H1 (cell line): ENCODE measurements at regions of chr1 and their contacts with region 1.

Region 1: DNA sequence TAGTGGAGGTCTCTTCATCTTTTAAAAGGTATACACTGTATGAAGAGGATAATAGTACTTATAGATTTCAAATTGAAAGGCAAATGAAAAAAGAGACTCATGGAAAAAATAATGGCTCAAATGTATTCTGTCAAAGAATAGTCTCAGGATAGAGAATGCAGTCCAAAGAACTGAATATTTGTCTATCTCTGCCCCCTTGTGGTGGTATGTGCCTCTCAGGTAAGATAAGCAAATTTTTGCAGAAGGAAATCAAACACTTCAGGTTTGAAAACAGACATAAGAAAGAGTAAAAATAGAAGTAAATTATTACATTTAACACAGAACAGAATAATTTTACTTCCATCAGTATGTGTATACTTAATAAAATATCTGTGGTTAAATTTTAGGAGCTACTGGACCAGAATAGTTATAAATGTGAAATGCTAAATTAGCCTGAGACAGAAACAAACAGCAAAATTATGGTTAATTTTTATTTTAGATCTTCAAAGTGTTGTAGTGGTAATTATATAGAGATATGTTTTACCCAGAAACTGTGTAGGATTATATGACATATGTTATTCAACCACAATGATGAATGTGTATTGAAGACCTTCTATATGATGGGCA is 164.4 kb upstream of the PALMD start:
- DNase-seq: no peak
- H3K4me3 ChIP-seq: no peak overlapping the region
- H3K27ac ChIP-seq: no peak overlapping the region
- H3K4me1 ChIP-seq: no peaks in the 10 kb centered on the region
- H3K27me3 ChIP-seq: no peaks in the 10 kb centered on the region
- CTCF ChIP-seq: peak in 2 of 3 experiments; percentile 58 to 69; a peak in 2 of 4 replicates
- EP300 ChIP-seq: no peak
- POLR2A ChIP-seq: no peak
- RAD21 ChIP-seq: peak; percentile 83 to 86

Region 2: DNA sequence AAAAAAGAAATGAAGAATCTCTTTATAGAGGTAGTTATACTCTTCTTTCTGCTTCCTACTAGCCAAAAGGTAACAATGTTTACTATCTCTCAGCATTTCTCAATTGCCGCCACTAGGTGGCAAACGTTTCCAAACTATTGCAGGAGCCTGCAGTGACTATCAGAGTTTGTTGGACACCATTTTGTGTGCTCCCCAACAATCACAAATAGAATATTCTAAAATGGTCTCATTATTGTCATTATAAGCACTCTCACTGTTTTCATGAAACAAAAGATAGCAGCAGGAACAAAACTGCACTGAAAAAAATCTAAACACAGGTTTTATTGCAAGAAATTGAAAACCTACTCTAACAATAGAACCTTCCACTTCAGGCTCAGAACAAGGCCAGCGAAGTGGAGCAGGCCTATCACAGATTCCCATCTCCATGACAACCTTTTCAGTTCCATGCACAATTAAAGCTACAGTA is 301.1 kb before region 1 on chr1:
- CTCF ChIA-PET with region 1: interaction called, 29 read pairs
- POLR2A ChIA-PET with region 1: no interaction called
- DNase-seq: peak; percentile 23 to 76
- H3K4me3 ChIP-seq: no peak overlapping the region
- H3K27ac ChIP-seq: no peak overlapping the region
- H3K4me1 ChIP-seq: no peaks in the 10 kb centered on the region
- H3K27me3 ChIP-seq: peaks cover 0 to 1% (median 0%) of the 10 kb centered on the region in 4 experiments; a peak in 1 of 7 replicates
- CTCF ChIP-seq: peak in 2 of 3 experiments; percentile 67 to 69; a peak in 3 of 4 replicates
- EP300 ChIP-seq: no peak
- POLR2A ChIP-seq: no peak
- RAD21 ChIP-seq: peak; percentile 90 to 92

Region 3: GRCh38 chr1:99469550-99469971 is 11.9 kb before region 1 on chr1:
- CTCF ChIA-PET with region 1: interaction called, 28 read pairs
- POLR2A ChIA-PET with region 1: no interaction called
- DNase-seq: no peak
- H3K4me3 ChIP-seq: no peak overlapping the region
- H3K27ac ChIP-seq: no peak overlapping the region
- H3K4me1 ChIP-seq: no peaks in the 10 kb centered on the region
- H3K27me3 ChIP-seq: no peaks in the 10 kb centered on the region
- CTCF ChIP-seq: no peak
- EP300 ChIP-seq: no peak
- POLR2A ChIP-seq: no peak
- RAD21 ChIP-seq: no peak

Region 4: DNA sequence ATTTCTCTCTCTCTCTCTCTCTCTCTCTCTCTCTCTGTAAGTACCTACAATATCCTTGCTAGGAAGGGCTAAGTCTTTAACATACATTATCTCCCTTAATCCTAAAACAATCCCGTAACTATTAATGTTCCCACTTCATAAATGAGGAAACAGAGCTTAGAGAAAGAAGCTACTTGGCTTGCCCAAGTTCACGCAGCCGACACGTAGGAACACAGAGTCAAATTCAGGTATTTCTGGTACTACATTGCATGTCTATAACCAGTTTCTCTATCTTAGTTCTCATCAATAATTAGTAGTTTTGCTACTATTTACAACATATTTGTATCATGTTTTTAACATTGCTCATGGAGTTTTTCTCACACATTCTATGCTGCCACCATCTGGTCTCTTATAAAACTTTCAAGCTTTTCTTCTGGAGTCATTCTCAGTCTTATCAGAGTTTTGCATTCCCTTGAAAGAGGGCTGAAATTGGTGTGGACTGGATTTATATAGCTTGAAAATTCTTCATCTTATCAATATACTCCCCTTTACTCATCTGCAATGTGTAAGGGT is 45.5 kb after region 1 on chr1:
- CTCF ChIA-PET with region 1: interaction called, 25 read pairs
- POLR2A ChIA-PET with region 1: no interaction called
- DNase-seq: no peak
- H3K4me3 ChIP-seq: no peak overlapping the region
- H3K27ac ChIP-seq: no peak overlapping the region
- H3K4me1 ChIP-seq: peaks cover 0 to 3% (median 0%) of the 10 kb centered on the region in 4 experiments; a peak in 1 of 7 replicates
- H3K27me3 ChIP-seq: no peaks in the 10 kb centered on the region
- CTCF ChIP-seq: peak in 1 of 3 experiments; percentile 15; a peak in 2 of 4 replicates
- EP300 ChIP-seq: no peak
- POLR2A ChIP-seq: no peak
- RAD21 ChIP-seq: peak; percentile 42 to 45; a peak in 3 of 4 replicates

Region 5: GRCh38 chr1:99580451-99580850 is 99.0 kb after region 1 on chr1:
- CTCF ChIA-PET with region 1: no interaction called
- POLR2A ChIA-PET with region 1: no interaction called
- DNase-seq: no peak
- H3K4me3 ChIP-seq: no peak overlapping the region
- H3K27ac ChIP-seq: no peak overlapping the region
- H3K4me1 ChIP-seq: no peaks in the 10 kb centered on the region
- H3K27me3 ChIP-seq: no peaks in the 10 kb centered on the region
- CTCF ChIP-seq: no peak
- EP300 ChIP-seq: no peak
- POLR2A ChIP-seq: no peak
- RAD21 ChIP-seq: no peak